Activated T-helper 1 cell treated with anti-CD3 and anti-CD28 coated beads, Interleukin-12 subunit alpha, Interleukin-12 subunit beta, Interleukin-2, Interleukin-4 antibody, amounts not matched to agents 30 ng/mL and 10 ng/mL and 1 ng/mL, durations not matched to agents 14 hours and 24 hours and 36 hours (primary cell): ENCODE measurements at regions of chr1 and their contacts with region 1.

Region 1: DNA sequence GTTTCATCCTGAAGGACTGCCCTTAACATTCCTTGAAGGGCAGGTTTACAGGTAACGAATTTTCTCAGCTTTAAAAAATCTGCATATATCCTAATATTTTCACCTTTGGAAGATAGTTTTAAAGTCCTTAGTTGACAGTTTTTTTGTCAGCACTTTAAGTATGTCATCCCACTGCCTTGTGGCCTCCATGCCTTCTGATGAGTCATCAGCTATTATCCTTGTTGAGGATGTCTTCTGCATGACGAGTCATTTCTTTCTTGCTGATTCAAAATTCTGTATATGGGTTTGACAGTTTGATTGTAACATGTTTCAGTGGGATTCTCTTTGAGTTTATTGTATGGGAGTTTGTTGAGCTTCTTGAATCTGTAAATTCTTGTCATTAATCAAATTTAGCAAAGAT is 500.6 kb downstream of the DISC1 start:
- DNase-seq: no peak
- H3K4me3 Mint-ChIP-seq: no peak overlapping the region
- H3K27ac Mint-ChIP-seq: no peak overlapping the region
- H3K4me1 Mint-ChIP-seq: peaks cover 13% of the 10 kb centered on the region
- H3K27me3 Mint-ChIP-seq: peaks cover 19% of the 10 kb centered on the region

Region 2: GRCh38 chr1:231626535-231626945 is 500.6 kb before region 1 on chr1 and contains the start of gene DISC1:
- intact Hi-C with region 1: loop called (anchors 10 kb)
- DNase-seq: peak; percentile 68
- H3K4me3 Mint-ChIP-seq: peak within 1 kb of the TSS; percentile 86
- H3K27ac Mint-ChIP-seq: peak within 1 kb of the TSS; percentile 71
- H3K4me1 Mint-ChIP-seq: peaks cover 32% of the 10 kb centered on the region
- H3K27me3 Mint-ChIP-seq: peaks cover 21% of the 10 kb centered on the region
- total RNA-seq, gene DISC1: 3.3 and 3.4 TPM in 2 replicates

Region 3: GRCh38 chr1:231931846-231932454 is 195.2 kb before region 1 on chr1:
- intact Hi-C with region 1: no loop called
- DNase-seq: no peak
- H3K4me3 Mint-ChIP-seq: no peak overlapping the region
- H3K27ac Mint-ChIP-seq: no peak overlapping the region
- H3K4me1 Mint-ChIP-seq: no peaks in the 10 kb centered on the region
- H3K27me3 Mint-ChIP-seq: peaks cover 15% of the 10 kb centered on the region

Region 4: DNA sequence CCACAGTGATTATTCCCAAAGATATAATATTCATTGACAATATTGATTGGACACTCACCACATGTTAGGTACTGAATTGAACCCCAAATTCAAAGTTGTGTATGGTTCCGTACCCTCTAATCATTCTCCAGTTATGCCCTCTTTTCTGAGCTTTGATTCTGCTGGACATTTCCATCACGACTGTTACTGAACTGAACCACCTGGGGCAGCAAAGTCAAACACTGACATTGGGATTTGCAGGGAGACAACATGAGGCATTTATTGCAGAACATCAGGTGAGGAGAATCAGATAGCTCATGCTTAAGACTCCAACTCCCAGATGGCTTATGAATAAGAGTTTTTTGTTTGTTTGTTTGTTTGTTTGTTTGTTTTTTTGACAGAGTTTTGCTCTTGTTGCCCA is 79.7 kb before region 1 on chr1:
- intact Hi-C with region 1: loop called (anchors 1 kb)
- DNase-seq: no peak
- H3K4me3 Mint-ChIP-seq: no peak overlapping the region
- H3K27ac Mint-ChIP-seq: no peak overlapping the region
- H3K4me1 Mint-ChIP-seq: no peaks in the 10 kb centered on the region
- H3K27me3 Mint-ChIP-seq: peaks cover 2% of the 10 kb centered on the region